ENCODE measurements at regions of chr7 and their contacts with region 1.

Region 1: GRCh38 chr7:23093546-23093945 is 12.0 kb upstream of the KLHL7 start:
- DNase-seq: no peak
- ATAC-seq: no peak

Region 2: GRCh38 chr7:22295402-22296264 is 797.9 kb before region 1 on chr7:
- intact Hi-C with region 1: no loop called
- DNase-seq: no peak
- ATAC-seq: peak; percentile 37

Region 3: DNA sequence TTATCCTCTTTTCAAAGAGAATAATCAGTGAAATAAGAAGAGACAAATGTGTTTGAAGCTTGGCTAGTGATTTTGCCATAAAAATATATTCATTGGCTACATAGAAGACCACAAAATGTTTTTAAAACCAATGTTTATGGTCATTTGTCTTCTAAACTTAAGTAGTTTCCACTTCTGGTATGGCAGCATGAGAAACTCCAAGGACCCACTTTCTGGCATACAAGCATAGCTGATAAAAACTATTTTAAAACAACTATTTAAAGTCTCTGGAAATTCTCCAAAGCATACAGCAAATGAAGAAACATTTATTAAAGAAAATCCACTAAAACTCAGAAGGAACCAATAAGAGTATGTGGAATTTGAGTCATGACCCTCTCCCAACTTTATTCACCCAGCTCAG is 181.7 kb before region 1 on chr7:
- intact Hi-C with region 1: no loop called
- DNase-seq: no peak
- ATAC-seq: no peak

Region 4: GRCh38 chr7:23043441-23043840 is 50.1 kb before region 1 on chr7:
- intact Hi-C with region 1: no loop called
- DNase-seq: no peak
- ATAC-seq: no peak

Region 5: GRCh38 chr7:23261843-23262452 is 168.4 kb after region 1 on chr7:
- intact Hi-C with region 1: loop called (anchors 5 kb)
- DNase-seq: peak; percentile 83
- ATAC-seq: peak; percentile 83

Measured in Right ventricle myocardium inferior (tissue), 1 donor.